GM12878 (cell line): ENCODE measurements at regions of chr1 and their contacts with region 1.

Region 1: GRCh38 chr1:160046494-160047110 is 14.8 kb upstream of the PIGM start:
- DNase-seq: no peak
- ATAC-seq: peak; percentile 96
- H3K4me3 ChIP-seq: 0 out of 2 replicates have a peak overlapping the region, but pooled peaks have one; percentile 16
- H3K27ac ChIP-seq: no peak overlapping the region
- H3K4me1 ChIP-seq: peaks cover 11% of the 10 kb centered on the region
- H3K27me3 ChIP-seq: no peaks in the 10 kb centered on the region; a peak in 3 of 4 replicates
- CTCF ChIP-seq: peak; percentile 54 to 65 (median 61)
- EP300 ChIP-seq: no peak
- POLR2A ChIP-seq: no peak
- RAD21 ChIP-seq: peak; percentile 78

Region 2: GRCh38 chr1:160018900-160019299 is 27.7 kb before region 1 on chr1:
- CTCF ChIA-PET with region 1: interaction called, 25 read pairs
- POLR2A ChIA-PET with region 1: no interaction called
- RAD21 ChIA-PET with region 1: interaction called, 8 read pairs
- SMC1A ChIA-PET with region 1: interaction called, 3 read pairs
- in situ Hi-C with region 1: no loop called
- intact Hi-C with region 1: no loop called
- DNase-seq: no peak
- ATAC-seq: no peak
- H3K4me3 ChIP-seq: no peak overlapping the region
- H3K27ac ChIP-seq: no peak overlapping the region
- H3K4me1 ChIP-seq: no peaks in the 10 kb centered on the region
- H3K27me3 ChIP-seq: no peaks in the 10 kb centered on the region; a peak in 2 of 4 replicates
- CTCF ChIP-seq: no peak
- EP300 ChIP-seq: no peak
- POLR2A ChIP-seq: no peak
- RAD21 ChIP-seq: no peak

Region 3: GRCh38 chr1:160031365-160032164 is 15.0 kb before region 1 on chr1 and contains the start of gene PIGM:
- CTCF ChIA-PET with region 1: interaction called, 61 read pairs
- POLR2A ChIA-PET with region 1: interaction called, 9 read pairs
- RAD21 ChIA-PET with region 1: interaction called, 3 read pairs
- SMC1A ChIA-PET with region 1: interaction called, 12 read pairs
- in situ Hi-C with region 1: no loop called
- intact Hi-C with region 1: no loop called
- DNase-seq: peak; percentile 66
- ATAC-seq: peak; percentile 97
- H3K4me3 ChIP-seq: peak within 1 kb of the TSS; percentile 97
- H3K27ac ChIP-seq: peak within 1 kb of the TSS; percentile 48
- H3K4me1 ChIP-seq: peaks cover 5% of the 10 kb centered on the region; the same call in 1 of the 2 replicates
- H3K27me3 ChIP-seq: no peaks in the 10 kb centered on the region
- CTCF ChIP-seq: no peak
- EP300 ChIP-seq: no peak
- POLR2A ChIP-seq: peak; percentile 79
- RAD21 ChIP-seq: no peak
- polyA plus RNA-seq, gene PIGM: 2.6 to 3.7 TPM

Region 4: GRCh38 chr1:160058087-160058486 is 11.5 kb after region 1 on chr1:
- CTCF ChIA-PET with region 1: interaction called, 35 read pairs
- POLR2A ChIA-PET with region 1: no interaction called
- RAD21 ChIA-PET with region 1: interaction called, 4 read pairs
- SMC1A ChIA-PET with region 1: interaction called, 11 read pairs
- in situ Hi-C with region 1: no loop called
- intact Hi-C with region 1: no loop called
- DNase-seq: no peak
- ATAC-seq: no peak
- H3K4me3 ChIP-seq: no peak overlapping the region
- H3K27ac ChIP-seq: no peak overlapping the region
- H3K4me1 ChIP-seq: no peaks in the 10 kb centered on the region
- H3K27me3 ChIP-seq: peaks cover 2 to 9% of the 10 kb centered on the region in 2 experiments
- CTCF ChIP-seq: peak; percentile 8 to 27 (median 21); a peak in 2 of 6 replicates
- EP300 ChIP-seq: no peak
- POLR2A ChIP-seq: no peak
- RAD21 ChIP-seq: 0 out of 2 replicates have a peak, but pooled peaks have one; percentile 3

Region 5: DNA sequence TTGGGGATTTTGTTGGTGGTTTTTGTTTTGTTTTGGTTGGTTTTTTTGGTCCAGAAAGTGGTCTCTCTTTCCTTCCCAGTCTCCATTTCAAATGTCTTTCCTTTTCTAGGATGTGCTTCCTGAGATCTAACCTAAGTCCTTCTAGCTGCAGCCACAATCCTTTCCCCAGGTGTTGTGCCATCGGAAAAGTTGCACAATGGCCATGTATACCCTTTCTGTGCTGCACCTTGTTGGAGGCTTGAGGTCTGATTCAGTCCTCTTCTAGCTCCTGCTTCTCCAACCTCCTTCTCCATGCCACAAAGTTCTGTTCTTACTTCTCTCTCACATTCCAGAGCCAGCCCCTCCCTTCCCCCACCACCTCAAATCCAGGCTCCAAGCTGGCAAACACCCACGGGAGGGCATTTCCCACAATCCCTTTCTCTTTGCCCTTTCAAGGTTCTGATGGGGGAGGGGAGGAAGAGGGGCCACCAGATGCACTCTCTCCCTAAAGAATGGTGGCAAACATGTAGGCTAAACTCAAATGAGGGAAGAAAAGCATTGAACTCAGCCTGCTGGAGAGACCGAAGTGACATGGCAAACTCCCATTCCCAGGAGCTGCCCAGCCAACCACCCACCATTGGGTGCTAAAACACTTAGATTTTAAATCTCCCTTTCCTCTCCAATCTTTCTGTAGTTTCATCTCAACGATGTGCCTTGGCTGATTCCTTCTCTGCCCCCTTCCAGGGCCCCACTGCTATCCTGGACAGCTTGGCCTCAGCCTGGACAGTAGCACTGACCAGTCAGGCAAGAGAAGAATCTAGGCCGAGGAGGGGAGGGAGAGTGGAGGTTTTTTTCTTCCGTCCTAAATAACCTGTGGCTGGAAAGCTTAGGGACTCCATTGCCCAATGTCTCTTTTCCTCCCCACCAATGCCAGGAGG is 20.5 kb after region 1 on chr1:
- CTCF ChIA-PET with region 1: interaction called, 1,035 read pairs
- POLR2A ChIA-PET with region 1: interaction called, 3 read pairs
- RAD21 ChIA-PET with region 1: no interaction called
- SMC1A ChIA-PET with region 1: interaction called, 11 read pairs
- in situ Hi-C with region 1: no loop called
- intact Hi-C with region 1: no loop called
- DNase-seq: no peak
- ATAC-seq: no peak
- H3K4me3 ChIP-seq: no peak overlapping the region
- H3K27ac ChIP-seq: no peak overlapping the region
- H3K4me1 ChIP-seq: peaks cover 18% of the 10 kb centered on the region
- H3K27me3 ChIP-seq: peaks cover 4 to 16% of the 10 kb centered on the region in 2 experiments
- CTCF ChIP-seq: no peak
- EP300 ChIP-seq: no peak
- POLR2A ChIP-seq: no peak
- RAD21 ChIP-seq: no peak

Region 6: GRCh38 chr1:160078512-160079195 is 32.1 kb after region 1 on chr1:
- CTCF ChIA-PET with region 1: interaction called, 1,035 read pairs
- POLR2A ChIA-PET with region 1: interaction called, 7 read pairs
- RAD21 ChIA-PET with region 1: interaction called, 50 read pairs
- SMC1A ChIA-PET with region 1: interaction called, 89 read pairs
- in situ Hi-C with region 1: no loop called
- intact Hi-C with region 1: no loop called
- DNase-seq: no peak
- ATAC-seq: peak; percentile 96
- H3K4me3 ChIP-seq: no peak overlapping the region
- H3K27ac ChIP-seq: no peak overlapping the region
- H3K4me1 ChIP-seq: no peaks in the 10 kb centered on the region; the same call in 1 of the 2 replicates
- H3K27me3 ChIP-seq: peaks cover 0 to 2% of the 10 kb centered on the region in 2 experiments; a peak in 3 of 4 replicates
- CTCF ChIP-seq: peak; percentile 78 to 97 (median 92)
- EP300 ChIP-seq: no peak
- POLR2A ChIP-seq: no peak
- RAD21 ChIP-seq: peak; percentile 78

Region 7: DNA sequence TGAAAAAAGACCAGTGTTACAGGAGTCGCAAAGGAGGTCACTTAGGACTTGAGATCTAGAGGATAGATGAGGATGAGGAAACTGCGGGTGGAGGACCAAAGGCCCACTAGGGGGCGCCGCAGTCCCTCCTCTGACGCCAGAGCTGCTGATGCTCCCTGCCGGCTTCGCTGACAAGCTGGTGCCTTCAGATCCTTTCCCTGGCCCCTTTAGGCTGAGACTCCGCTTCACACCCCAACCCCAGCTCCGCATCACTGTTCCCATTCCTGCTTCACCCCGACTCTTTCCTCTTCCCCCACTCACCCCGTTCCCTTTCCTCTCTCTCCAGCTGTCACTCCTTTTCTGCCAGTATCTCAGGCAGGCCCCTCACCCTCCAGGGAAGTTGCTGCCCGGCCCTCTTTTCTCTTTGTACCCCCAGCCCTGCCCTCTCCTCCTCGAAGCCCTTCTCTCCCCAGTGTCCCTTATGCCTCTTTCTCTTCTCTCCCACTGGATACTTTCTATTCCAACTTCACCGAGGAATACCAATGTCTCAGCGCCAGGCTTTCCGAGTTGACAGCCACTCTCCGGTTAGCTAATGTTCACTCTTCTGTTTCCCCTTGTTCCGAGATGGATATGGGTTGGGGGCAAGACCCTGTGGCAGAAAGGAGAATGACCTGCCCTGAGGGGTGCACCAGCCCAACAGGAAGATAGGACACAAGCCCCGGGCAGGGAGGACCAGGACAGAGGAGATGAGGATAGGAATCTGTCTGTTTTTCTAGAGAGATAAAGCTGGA is 39.3 kb after region 1 on chr1:
- CTCF ChIA-PET with region 1: interaction called, 1,035 read pairs
- POLR2A ChIA-PET with region 1: interaction called, 4 read pairs
- RAD21 ChIA-PET with region 1: interaction called, 50 read pairs
- SMC1A ChIA-PET with region 1: interaction called, 89 read pairs
- in situ Hi-C with region 1: no loop called
- intact Hi-C with region 1: loop called (anchors 2 kb)
- DNase-seq: no peak
- ATAC-seq: peak; percentile 87
- H3K4me3 ChIP-seq: no peak overlapping the region
- H3K27ac ChIP-seq: no peak overlapping the region
- H3K4me1 ChIP-seq: no peaks in the 10 kb centered on the region
- H3K27me3 ChIP-seq: peaks cover 0 to 2% of the 10 kb centered on the region in 2 experiments; a peak in 3 of 4 replicates
- CTCF ChIP-seq: peak; percentile 82 to 89 (median 88)
- EP300 ChIP-seq: no peak
- POLR2A ChIP-seq: no peak
- RAD21 ChIP-seq: peak; percentile 59